ENCODE measurements at regions of chr6 and their contacts with region 1.

Region 1: DNA sequence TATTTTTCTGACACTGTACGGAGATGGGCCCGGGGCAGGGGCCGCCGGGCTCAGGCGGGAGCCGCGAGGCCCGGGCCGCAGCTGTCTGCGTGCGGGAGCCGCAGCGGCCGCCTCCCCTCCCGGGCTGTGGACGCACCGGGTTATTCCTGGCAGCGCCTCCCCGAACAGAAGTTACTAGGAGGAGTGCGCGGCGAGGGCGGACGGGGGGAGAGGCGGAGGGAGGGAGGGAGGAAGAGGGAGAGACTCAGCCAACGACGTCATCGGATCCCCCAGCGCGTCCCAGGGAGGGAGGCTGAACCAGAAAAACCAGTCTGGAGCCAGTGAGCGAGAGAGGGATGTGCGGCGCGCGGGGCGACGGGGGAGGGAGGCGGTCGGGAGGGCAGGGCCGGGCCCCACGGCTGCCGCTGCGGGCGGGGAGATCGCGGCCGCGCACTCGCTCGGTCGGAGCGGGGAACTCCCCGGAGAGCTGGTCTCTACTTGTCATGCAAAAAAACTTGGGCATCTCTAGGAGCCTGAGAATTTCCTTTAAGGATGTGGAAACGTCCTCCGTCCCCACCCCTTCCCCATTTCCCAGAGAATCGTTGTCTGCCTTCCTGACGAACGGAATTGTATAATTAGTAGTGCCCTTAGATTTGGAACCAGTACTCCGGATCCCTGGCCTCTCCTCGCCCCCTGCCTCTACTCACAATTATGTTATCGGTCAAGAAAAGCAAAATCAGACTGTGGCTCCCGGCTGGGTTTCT is 1.4 kb upstream of the HIVEP2 start:
- DNase-seq: peak; percentile 96
- H3K4me3 Mint-ChIP-seq: peak overlapping the region; percentile 96
- H3K27ac Mint-ChIP-seq: peak overlapping the region; percentile 99
- H3K4me1 Mint-ChIP-seq: peaks cover 28% of the 10 kb centered on the region
- H3K27me3 Mint-ChIP-seq: peaks cover 2% of the 10 kb centered on the region

Region 2: DNA sequence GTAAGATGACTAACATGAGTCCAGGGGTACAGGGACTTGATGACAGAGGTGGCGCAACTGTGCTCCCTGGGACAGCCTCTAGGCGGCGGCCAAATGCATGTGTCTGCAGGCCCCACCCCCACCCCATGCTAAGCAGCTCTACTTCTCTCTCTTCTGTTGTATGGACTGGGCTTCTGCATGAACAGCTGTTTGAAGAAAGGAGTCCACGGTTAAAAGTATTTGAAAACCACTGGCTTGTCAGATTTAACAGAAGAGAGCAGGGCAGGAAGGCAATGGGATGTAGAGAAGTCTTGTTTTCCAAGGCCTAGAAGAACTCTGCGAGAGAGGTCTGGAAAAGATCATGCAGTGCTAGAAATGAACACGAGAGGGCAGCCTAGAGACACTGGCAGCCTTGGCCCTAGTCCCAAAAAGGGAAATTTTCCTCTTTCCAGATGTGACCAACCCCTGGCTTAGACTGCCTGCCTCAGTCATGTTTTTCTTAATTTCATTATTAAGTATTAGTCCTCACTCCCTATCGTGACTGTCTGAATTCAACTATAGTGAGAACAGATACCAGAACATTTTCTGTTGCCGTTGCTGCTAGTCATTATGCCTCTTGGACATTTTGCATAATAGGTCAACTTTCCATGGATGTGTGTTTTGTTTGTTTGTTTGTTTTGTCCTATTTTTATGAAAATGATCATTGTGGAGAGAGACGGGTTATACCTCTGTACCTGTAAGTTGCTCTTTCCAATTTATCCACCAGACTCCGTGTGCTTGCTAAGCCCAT is 379.5 kb before region 1 on chr6:
- CTCF ChIA-PET with region 1: no interaction called
- POLR2A ChIA-PET with region 1: no interaction called
- intact Hi-C with region 1: loop called (anchors 5 kb)
- DNase-seq: peak; percentile 63
- H3K4me3 Mint-ChIP-seq: no peak overlapping the region
- H3K27ac Mint-ChIP-seq: no peak overlapping the region
- H3K4me1 Mint-ChIP-seq: peaks cover 49% of the 10 kb centered on the region
- H3K27me3 Mint-ChIP-seq: no peaks in the 10 kb centered on the region

Region 3: GRCh38 chr6:142830116-142830710 is 116.1 kb before region 1 on chr6:
- CTCF ChIA-PET with region 1: no interaction called
- POLR2A ChIA-PET with region 1: no interaction called
- intact Hi-C with region 1: no loop called
- DNase-seq: no peak
- H3K4me3 Mint-ChIP-seq: no peak overlapping the region
- H3K27ac Mint-ChIP-seq: peak overlapping the region; percentile 2
- H3K4me1 Mint-ChIP-seq: peaks cover 73% of the 10 kb centered on the region
- H3K27me3 Mint-ChIP-seq: no peaks in the 10 kb centered on the region

Region 4: GRCh38 chr6:142845624-142846458 is 100.5 kb before region 1 on chr6:
- CTCF ChIA-PET with region 1: interaction called, 6 read pairs
- POLR2A ChIA-PET with region 1: interaction called, 25 read pairs
- intact Hi-C with region 1: loop called (anchors 1 kb)
- DNase-seq: peak; percentile 65
- H3K4me3 Mint-ChIP-seq: peak overlapping the region; percentile 72
- H3K27ac Mint-ChIP-seq: peak overlapping the region; percentile 88
- H3K4me1 Mint-ChIP-seq: peaks cover 96% of the 10 kb centered on the region
- H3K27me3 Mint-ChIP-seq: no peaks in the 10 kb centered on the region

Region 5: GRCh38 chr6:142913511-142914047 is 32.8 kb before region 1 on chr6:
- CTCF ChIA-PET with region 1: interaction called, 4 read pairs
- POLR2A ChIA-PET with region 1: interaction called, 16 read pairs
- intact Hi-C with region 1: loop called (anchors 1 kb)
- DNase-seq: peak; percentile 84
- H3K4me3 Mint-ChIP-seq: peak overlapping the region; percentile 72
- H3K27ac Mint-ChIP-seq: peak overlapping the region; percentile 94
- H3K4me1 Mint-ChIP-seq: peaks cover 80% of the 10 kb centered on the region
- H3K27me3 Mint-ChIP-seq: no peaks in the 10 kb centered on the region

Region 6: GRCh38 chr6:143450453-143451371 is 504.4 kb after region 1 on chr6 and contains the starts of genes ADAT2 and PEX3:
- CTCF ChIA-PET with region 1: no interaction called
- POLR2A ChIA-PET with region 1: interaction called, 3 read pairs
- intact Hi-C with region 1: loop called (anchors 1 kb)
- DNase-seq: peak; percentile 97
- H3K4me3 Mint-ChIP-seq: peak within 1 kb of the TSS; percentile 88
- H3K27ac Mint-ChIP-seq: peak within 1 kb of the TSS; percentile 91
- H3K4me1 Mint-ChIP-seq: peaks cover 45% of the 10 kb centered on the region
- H3K27me3 Mint-ChIP-seq: no peaks in the 10 kb centered on the region
- total RNA-seq, gene ADAT2: 26.0 to 27.0 TPM
- total RNA-seq, gene PEX3: 19.7 to 21.1 TPM

Region 7: DNA sequence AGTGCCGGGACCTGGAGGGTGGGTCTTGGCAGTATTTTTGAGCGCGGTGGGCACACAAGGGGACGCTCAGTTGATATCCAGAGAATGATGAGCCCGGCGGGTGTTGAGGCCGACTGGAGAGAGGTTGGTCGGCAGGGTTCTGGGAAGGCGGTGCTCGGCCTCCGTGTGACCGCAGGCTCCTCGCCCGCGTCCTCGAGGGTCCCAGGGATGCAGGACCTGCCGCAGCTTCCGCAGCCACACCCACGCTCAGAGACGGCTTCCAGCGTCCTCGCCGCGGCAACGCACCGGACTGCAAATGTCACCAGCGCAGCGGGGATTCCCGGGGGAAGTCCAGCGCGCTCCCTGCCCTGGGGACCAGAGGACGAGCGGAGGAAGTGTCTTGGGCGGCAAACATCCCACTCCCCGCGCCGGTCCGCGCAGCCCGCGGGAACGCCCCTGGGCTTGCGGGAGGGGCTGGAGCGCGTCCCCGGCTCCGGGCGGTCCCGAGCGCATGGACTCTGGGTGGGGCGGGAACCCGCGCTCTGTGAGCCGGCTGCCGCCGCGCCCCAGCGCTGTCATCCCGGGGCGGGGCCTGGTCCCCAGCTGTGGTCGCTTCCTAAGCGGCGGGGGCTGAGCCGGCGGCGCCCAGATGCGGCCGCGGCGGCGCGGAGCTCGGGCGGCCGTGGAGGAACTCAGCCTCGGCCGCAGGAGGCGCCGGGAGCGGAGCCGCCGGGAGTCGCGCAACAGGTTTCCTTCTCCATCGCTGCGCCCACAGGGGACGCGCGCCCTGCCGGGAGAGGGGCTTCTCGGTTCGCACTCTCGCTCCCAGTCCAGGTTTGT is 1203.7 kb after region 1 on chr6 and contains the start of gene STX11:
- CTCF ChIA-PET with region 1: no interaction called
- POLR2A ChIA-PET with region 1: no interaction called
- intact Hi-C with region 1: loop called (anchors 10 kb)
- DNase-seq: peak; percentile 88
- H3K4me3 Mint-ChIP-seq: peak within 1 kb of the TSS; percentile 88
- H3K27ac Mint-ChIP-seq: peak within 1 kb of the TSS; percentile 98
- H3K4me1 Mint-ChIP-seq: peaks cover 41% of the 10 kb centered on the region
- H3K27me3 Mint-ChIP-seq: no peaks in the 10 kb centered on the region
- total RNA-seq, gene STX11: 16.0 to 16.6 TPM